ENCODE measurements at regions of chr4 and their contacts with region 1.

Region 1: DNA sequence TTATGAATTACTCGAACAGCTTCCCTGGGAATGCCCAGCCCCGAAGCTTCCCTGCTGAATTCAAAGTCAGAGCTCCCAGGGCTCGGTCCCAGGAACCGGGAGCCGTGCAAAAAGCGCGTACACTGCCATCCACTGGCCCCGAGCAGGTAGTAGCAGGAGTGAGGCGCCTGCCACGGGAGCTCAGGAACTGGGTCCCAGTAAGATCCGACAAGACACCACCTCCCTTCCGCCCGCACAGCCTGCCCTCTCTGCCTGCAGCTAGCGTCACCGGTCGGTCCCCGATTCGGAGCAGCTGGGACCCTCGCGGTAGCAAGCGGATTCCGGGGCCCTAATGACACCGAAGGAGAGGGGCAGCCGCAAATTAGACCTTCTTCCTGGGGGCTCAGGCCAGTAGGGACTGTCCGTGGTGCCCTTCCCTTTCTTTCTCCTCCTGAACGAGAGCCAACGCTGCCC is 1.2 kb downstream of the CORIN start:
- DNase-seq: peak; percentile 85
- ATAC-seq: peak; percentile 95 to 97
- H3K4me3 ChIP-seq: peak overlapping the region; percentile 61
- H3K27ac ChIP-seq: no peak overlapping the region
- H3K4me1 ChIP-seq: peaks cover 30% of the 10 kb centered on the region
- H3K27me3 ChIP-seq: peaks cover 5% of the 10 kb centered on the region
- CTCF ChIP-seq: peak; percentile 71

Region 2: DNA sequence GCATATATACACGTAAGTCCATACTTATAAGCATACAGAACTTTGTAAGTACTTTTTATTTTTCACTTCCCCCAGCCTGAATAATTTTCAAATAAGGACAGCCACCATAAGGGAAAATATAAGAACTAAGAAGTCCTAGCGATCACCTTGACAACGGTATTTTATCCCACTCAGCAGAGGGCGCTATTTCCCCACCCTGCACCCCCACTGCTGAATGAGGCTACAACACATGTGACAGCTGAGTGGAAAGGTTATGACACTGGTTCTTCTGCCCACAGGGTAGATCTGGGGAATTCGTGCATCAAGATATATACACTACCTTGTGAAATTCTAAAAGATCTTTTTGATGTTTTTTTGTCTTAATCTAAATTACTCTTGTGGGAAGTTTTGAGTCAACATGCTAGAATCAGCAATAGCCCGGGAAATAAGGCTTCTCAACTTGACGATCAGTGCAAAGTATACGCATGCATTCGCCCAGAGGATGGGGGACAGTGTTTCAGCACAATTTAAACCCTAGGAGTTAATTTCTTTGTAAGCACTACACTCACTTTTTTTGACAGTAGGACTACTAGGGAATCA is 150.3 kb before region 1 on chr4:
- intact Hi-C with region 1: loop called (anchors 10 kb)
- DNase-seq: peak; percentile 48
- ATAC-seq: peak; percentile 85 to 90
- H3K4me3 ChIP-seq: no peak overlapping the region
- H3K27ac ChIP-seq: no peak overlapping the region
- H3K4me1 ChIP-seq: no peaks in the 10 kb centered on the region
- H3K27me3 ChIP-seq: no peaks in the 10 kb centered on the region
- CTCF ChIP-seq: peak; percentile 74

Measured in lower lobe of right lung (tissue), 2 donors.